ENCODE measurements at regions of chr6 and their contacts with region 1.

Region 1: GRCh38 chr6:35139908-35140655 is 1.1 kb downstream of the TCP11 start:
- DNase-seq: peak; percentile 26 to 51
- ATAC-seq: peak in 2 of 4 donors; percentile 44 to 79
- H3K4me3 ChIP-seq: no peak overlapping the region
- H3K27ac ChIP-seq: no peak overlapping the region
- H3K4me1 ChIP-seq: no peaks in the 10 kb centered on the region
- H3K27me3 ChIP-seq: peaks cover 0 to 6% (median 0%) of the 10 kb centered on the region in 3 donors
- CTCF ChIP-seq: peak; percentile 88

Region 2: GRCh38 chr6:35081426-35081851 is 58.6 kb before region 1 on chr6:
- intact Hi-C with region 1: no loop called
- DNase-seq: no peak
- ATAC-seq: no peak
- H3K4me3 ChIP-seq: no peak overlapping the region
- H3K27ac ChIP-seq: no peak overlapping the region
- H3K4me1 ChIP-seq: no peaks in the 10 kb centered on the region
- H3K27me3 ChIP-seq: no peaks in the 10 kb centered on the region
- CTCF ChIP-seq: no peak

Region 3: GRCh38 chr6:35209081-35209480 is 69.0 kb after region 1 on chr6:
- intact Hi-C with region 1: loop called in 1 of 2 experiments (anchors 5 kb)
- DNase-seq: no peak
- ATAC-seq: no peak
- H3K4me3 ChIP-seq: no peak overlapping the region
- H3K27ac ChIP-seq: no peak overlapping the region
- H3K4me1 ChIP-seq: no peaks in the 10 kb centered on the region
- H3K27me3 ChIP-seq: peaks cover 0 to 61% (median 27%) of the 10 kb centered on the region in 3 donors
- CTCF ChIP-seq: no peak

Measured in psoas muscle (tissue), 8 donors.